ENCODE measurements at regions of chr2 and their contacts with region 1.

Region 1: GRCh38 chr2:158276619-158277471 is 175.2 kb downstream of the UPP2 start:
- DNase-seq: no peak
- H3K4me3 ChIP-seq: no peak overlapping the region
- H3K27ac ChIP-seq: no peak overlapping the region
- H3K4me1 ChIP-seq: no peaks in the 10 kb centered on the region
- H3K27me3 ChIP-seq: no peaks in the 10 kb centered on the region
- CTCF ChIP-seq: no peak
- POLR2A ChIP-seq: no peak

Region 2: DNA sequence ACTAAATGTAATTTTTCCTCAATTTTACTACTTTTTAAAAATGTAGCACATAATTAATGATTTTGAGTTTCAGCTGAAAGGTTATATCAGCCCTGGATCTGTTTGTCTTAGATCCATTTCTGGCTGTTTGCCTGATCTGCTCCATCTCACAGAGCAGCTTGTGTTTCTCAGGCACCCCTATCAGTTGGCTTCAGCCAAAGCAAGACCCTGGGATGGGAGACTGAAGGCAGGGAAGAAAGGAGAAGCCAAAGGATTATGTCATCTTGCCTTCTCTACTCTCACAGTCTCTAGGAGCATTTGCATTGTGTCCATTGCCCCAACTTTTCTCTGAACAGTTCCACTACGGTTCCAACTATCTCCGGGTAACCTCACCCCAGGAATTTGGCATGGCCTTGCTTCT is 69.2 kb after region 1 on chr2:
- intact Hi-C with region 1: loop called (anchors 5 kb)
- DNase-seq: no peak
- H3K4me3 ChIP-seq: no peak overlapping the region
- H3K27ac ChIP-seq: no peak overlapping the region
- H3K4me1 ChIP-seq: no peaks in the 10 kb centered on the region
- H3K27me3 ChIP-seq: no peaks in the 10 kb centered on the region
- CTCF ChIP-seq: no peak
- POLR2A ChIP-seq: no peak